ENCODE measurements at regions of chr6 and their contacts with region 1.

Region 1: GRCh38 chr6:2999618-3000557 is at the start of gene NQO2:
- DNase-seq: peak; percentile 96
- H3K4me3 ChIP-seq: peak within 1 kb of the TSS; percentile 58 to 93 (median 82)
- H3K27ac ChIP-seq: peak within 1 kb of the TSS; percentile 85 to 90 (median 89)
- H3K4me1 ChIP-seq: peaks cover 0 to 21% (median 16%) of the 10 kb centered on the region in 4 donors
- H3K27me3 ChIP-seq: no peaks in the 10 kb centered on the region
- CTCF ChIP-seq: peak in 1 of 4 experiments; percentile 18
- EP300 ChIP-seq: no peak
- POLR2A ChIP-seq: peak; percentile 74 to 85
- total RNA-seq, gene NQO2: 14.7 to 33.2 (median 24.0) TPM

Region 2: GRCh38 chr6:3023663-3024483 is 24.0 kb after region 1 on chr6:
- intact Hi-C with region 1: loop called (anchors 2 kb)
- DNase-seq: peak; percentile 97
- H3K4me3 ChIP-seq: peak overlapping the region; percentile 24 to 58 (median 46)
- H3K27ac ChIP-seq: peak overlapping the region; percentile 79 to 90 (median 84)
- H3K4me1 ChIP-seq: peaks cover 0 to 39% (median 27%) of the 10 kb centered on the region in 4 donors
- H3K27me3 ChIP-seq: no peaks in the 10 kb centered on the region
- CTCF ChIP-seq: no peak
- EP300 ChIP-seq: peak in 2 of 4 donors; percentile 17 to 46
- POLR2A ChIP-seq: peak; percentile 61 to 69

Region 3: DNA sequence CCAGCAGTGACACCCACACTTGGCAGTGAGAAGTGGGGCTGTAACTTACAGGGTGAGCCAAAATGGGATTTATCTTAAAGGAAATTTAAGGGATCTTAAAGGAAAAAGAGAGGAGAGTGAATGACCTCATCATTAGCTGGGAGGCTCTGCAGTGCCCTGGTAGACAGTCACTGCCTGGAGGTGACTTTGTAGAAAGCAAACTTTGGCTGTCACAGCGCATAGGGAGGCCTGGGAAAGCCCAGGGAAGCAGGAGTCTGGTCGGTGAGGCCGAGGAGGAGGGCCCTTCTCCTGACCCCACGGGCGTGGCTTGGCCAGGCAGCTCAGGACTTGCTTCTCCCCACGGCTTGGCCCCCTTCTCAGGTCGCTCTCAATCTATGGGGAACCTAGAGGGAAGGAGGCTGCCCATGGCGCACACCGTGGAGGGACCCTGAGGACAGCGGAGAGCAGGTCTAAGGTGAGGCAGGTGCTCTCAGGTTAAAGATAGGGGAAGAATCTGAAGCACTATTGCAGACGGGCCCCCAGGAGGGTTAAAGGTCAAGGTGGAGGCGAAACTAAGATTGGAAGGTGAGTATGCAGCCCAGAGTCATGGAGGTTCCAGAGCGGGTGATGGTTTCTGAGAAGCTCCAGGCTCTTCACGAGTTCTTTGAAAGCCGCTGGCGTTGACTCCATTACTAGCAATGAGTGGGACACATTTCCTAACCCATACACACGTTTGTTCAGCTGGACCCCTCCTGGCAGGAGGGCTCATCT is 52.8 kb after region 1 on chr6:
- intact Hi-C with region 1: loop called (anchors 1 kb)
- DNase-seq: no peak
- H3K4me3 ChIP-seq: no peak overlapping the region
- H3K27ac ChIP-seq: peak overlapping the region in 1 of 4 donors; percentile 72
- H3K4me1 ChIP-seq: peaks cover 0 to 12% (median 8%) of the 10 kb centered on the region in 4 donors
- H3K27me3 ChIP-seq: no peaks in the 10 kb centered on the region
- CTCF ChIP-seq: no peak
- EP300 ChIP-seq: no peak
- POLR2A ChIP-seq: no peak

Region 4: GRCh38 chr6:3258720-3259490 is 259.0 kb after region 1 on chr6 and contains the start of gene PSMG4:
- intact Hi-C with region 1: loop called (anchors 5 kb)
- DNase-seq: peak; percentile 97
- H3K4me3 ChIP-seq: peak within 1 kb of the TSS; percentile 73 to 99 (median 86)
- H3K27ac ChIP-seq: peak within 1 kb of the TSS; percentile 75 to 83 (median 80)
- H3K4me1 ChIP-seq: peaks cover 0 to 39% (median 28%) of the 10 kb centered on the region in 4 donors
- H3K27me3 ChIP-seq: no peaks in the 10 kb centered on the region
- CTCF ChIP-seq: no peak
- EP300 ChIP-seq: no peak
- POLR2A ChIP-seq: peak in 1 of 2 donors; percentile 25
- total RNA-seq, gene PSMG4: 26.4 to 39.0 (median 30.6) TPM

Region 5: DNA sequence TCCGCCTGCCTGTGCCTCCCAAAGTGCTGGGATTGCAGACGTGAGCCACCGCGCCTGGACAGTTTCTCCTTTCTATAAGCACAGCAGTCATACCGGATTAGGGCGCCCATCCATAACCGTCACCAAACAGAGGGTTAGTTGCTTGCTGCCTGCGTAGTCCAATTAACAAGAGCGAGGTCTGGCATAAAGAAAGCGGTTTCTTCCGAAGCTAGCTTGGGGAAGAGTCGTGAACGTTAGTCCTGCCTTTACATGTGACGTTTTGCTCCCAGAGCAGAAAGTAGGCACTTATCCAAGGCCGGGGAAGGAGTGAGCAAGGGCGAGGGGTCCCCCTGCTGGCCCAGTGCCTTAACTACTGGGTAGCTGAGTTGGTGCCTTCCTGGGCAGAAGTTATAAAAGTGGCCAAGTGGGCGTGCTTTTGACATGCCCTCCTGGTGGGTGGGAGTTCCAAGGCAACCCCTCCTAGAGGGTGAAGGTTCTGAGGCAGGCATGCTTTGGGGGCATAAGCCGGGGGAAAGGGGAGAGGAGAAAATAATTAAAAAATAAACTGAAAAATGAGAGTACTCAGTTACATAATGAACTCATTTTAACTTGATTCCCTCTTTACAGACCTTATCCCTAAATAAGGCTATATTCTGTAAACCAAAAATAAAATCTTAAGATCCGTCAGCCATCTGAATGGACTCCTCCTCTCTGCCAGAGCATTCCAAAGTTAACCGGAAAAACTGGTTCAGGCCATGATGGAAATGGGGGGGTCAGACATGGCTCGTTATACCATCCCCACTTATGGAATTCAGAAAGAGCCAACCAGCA is 991.0 kb after region 1 on chr6:
- intact Hi-C with region 1: no loop called
- DNase-seq: peak; percentile 96
- H3K4me3 ChIP-seq: peak overlapping the region; percentile 33 to 52 (median 49)
- H3K27ac ChIP-seq: peak overlapping the region; percentile 75 to 84 (median 78)
- H3K4me1 ChIP-seq: peaks cover 0 to 22% (median 14%) of the 10 kb centered on the region in 4 donors
- H3K27me3 ChIP-seq: no peaks in the 10 kb centered on the region
- CTCF ChIP-seq: peak; percentile 69 to 82 (median 76)
- EP300 ChIP-seq: no peak
- POLR2A ChIP-seq: no peak